CD4-positive, alpha-beta memory T cell (primary cell): ENCODE measurements at regions of chr3 and their contacts with region 1.

Region 1: DNA sequence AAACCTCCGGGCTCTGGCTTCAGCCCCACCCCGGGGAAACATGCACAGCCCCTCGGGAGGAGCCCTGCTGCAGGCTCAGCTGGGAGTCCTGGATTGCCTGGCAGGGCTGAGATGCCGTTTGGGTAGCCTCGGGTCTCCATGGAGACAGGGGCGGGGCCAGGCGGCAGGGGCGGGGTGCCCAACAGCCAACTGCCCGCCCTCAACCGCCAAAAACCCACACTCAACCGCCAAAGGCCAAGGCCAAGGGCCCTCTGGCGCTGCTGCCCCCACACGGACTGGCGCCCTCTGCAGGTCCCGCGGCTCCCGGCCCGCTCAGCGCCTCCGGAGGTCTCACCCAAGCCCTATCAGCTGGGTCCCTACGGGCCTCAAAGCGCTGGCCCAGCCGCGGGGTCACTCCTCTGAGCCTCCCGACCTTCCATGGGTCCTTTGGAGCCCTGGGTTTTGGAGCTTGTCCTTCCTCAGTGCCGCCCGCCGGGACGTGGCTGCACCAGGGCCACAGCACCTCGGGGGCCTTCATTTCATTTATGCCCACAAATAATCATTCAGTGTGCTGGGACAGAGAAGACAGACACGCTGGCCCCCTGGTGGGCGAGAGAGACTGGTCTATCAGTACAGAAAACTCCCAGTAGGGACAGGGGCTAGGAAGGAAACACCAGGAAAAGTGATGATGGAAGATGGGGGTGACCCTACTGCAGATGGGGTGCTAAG is 33.5 kb upstream of the ACAD9 start:
- DNase-seq: peak; percentile 71 to 82 (median 73)
- H3K4me3 ChIP-seq: peak overlapping the region in 1 of 2 donors; percentile 52
- H3K4me3 Mint-ChIP-seq: peak overlapping the region; percentile 75 to 95 (median 88)
- H3K27ac ChIP-seq: peak overlapping the region; percentile 29
- H3K27ac Mint-ChIP-seq: peak overlapping the region; percentile 45 to 97 (median 84)
- H3K4me1 ChIP-seq: peaks cover 18% of the 10 kb centered on the region
- H3K4me1 Mint-ChIP-seq: peaks cover 8 to 14% (median 11%) of the 10 kb centered on the region in 4 donors
- H3K27me3 ChIP-seq: no peaks in the 10 kb centered on the region
- H3K27me3 Mint-ChIP-seq: no peaks in the 10 kb centered on the region

Region 2: GRCh38 chr3:128725932-128726690 is 119.8 kb before region 1 on chr3 and contains the start of gene RAB7A:
- CTCF ChIA-PET with region 1: interaction called, 6 read pairs
- POLR2A ChIA-PET with region 1: no interaction called
- intact Hi-C with region 1: loop called (anchors 2 kb)
- DNase-seq: peak; percentile 96 to 97 (median 96)
- H3K4me3 ChIP-seq: peak within 1 kb of the TSS; percentile 79 to 86
- H3K4me3 Mint-ChIP-seq: peak within 1 kb of the TSS; percentile 93 to 100 (median 97)
- H3K27ac ChIP-seq: peak within 1 kb of the TSS; percentile 98
- H3K27ac Mint-ChIP-seq: peak within 1 kb of the TSS; percentile 95 to 98 (median 97)
- H3K4me1 ChIP-seq: peaks cover 50% of the 10 kb centered on the region
- H3K4me1 Mint-ChIP-seq: peaks cover 40 to 59% (median 47%) of the 10 kb centered on the region in 4 donors
- H3K27me3 ChIP-seq: no peaks in the 10 kb centered on the region
- H3K27me3 Mint-ChIP-seq: peaks cover 0 to 2% of the 10 kb centered on the region in 2 donors
- total RNA-seq, gene RAB7A: 141 to 152 TPM

Region 3: GRCh38 chr3:128787256-128788240 is 58.4 kb before region 1 on chr3:
- CTCF ChIA-PET with region 1: interaction called, 29 read pairs
- POLR2A ChIA-PET with region 1: no interaction called
- intact Hi-C with region 1: loop called (anchors 1 kb)
- DNase-seq: peak; percentile 39 to 77 (median 43)
- H3K4me3 ChIP-seq: peak overlapping the region; percentile 0 to 57
- H3K4me3 Mint-ChIP-seq: peak overlapping the region; percentile 53 to 90 (median 84)
- H3K27ac ChIP-seq: peak overlapping the region; percentile 48
- H3K27ac Mint-ChIP-seq: peak overlapping the region; percentile 89 to 98 (median 94)
- H3K4me1 ChIP-seq: peaks cover 79% of the 10 kb centered on the region
- H3K4me1 Mint-ChIP-seq: peaks cover 56 to 87% (median 72%) of the 10 kb centered on the region in 4 donors
- H3K27me3 ChIP-seq: no peaks in the 10 kb centered on the region
- H3K27me3 Mint-ChIP-seq: no peaks in the 10 kb centered on the region

Region 4: GRCh38 chr3:128804017-128804810 is 41.7 kb before region 1 on chr3:
- CTCF ChIA-PET with region 1: interaction called, 6 read pairs
- POLR2A ChIA-PET with region 1: interaction called, 6 read pairs
- intact Hi-C with region 1: loop called (anchors 5 kb)
- DNase-seq: peak; percentile 77 to 85 (median 81)
- H3K4me3 ChIP-seq: peak overlapping the region; percentile 26 to 45
- H3K4me3 Mint-ChIP-seq: peak overlapping the region; percentile 78 to 89 (median 84)
- H3K27ac ChIP-seq: peak overlapping the region; percentile 81
- H3K27ac Mint-ChIP-seq: peak overlapping the region; percentile 90 to 97 (median 95)
- H3K4me1 ChIP-seq: peaks cover 68% of the 10 kb centered on the region
- H3K4me1 Mint-ChIP-seq: peaks cover 54 to 78% (median 67%) of the 10 kb centered on the region in 4 donors
- H3K27me3 ChIP-seq: no peaks in the 10 kb centered on the region
- H3K27me3 Mint-ChIP-seq: no peaks in the 10 kb centered on the region

Region 5: DNA sequence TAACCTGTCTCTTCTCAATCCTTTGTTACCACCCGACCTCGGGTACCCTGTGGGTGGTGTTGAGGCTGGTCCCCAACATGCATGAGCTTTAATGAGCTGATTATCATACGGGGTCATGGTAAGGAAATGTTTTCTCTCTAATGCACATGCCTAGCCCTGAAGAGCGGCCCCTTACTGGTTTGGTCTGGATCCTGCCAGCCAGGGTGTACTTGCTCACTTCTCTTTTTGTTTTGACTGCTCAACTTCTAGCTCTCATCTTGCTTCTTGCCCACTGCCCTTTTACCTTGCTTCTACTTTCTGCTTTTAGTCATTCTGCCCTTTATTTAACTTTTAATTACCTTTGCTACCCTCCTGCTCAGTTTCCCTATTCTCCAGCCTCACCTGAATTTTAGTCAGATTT is 10.8 kb before region 1 on chr3:
- CTCF ChIA-PET with region 1: no interaction called
- POLR2A ChIA-PET with region 1: no interaction called
- intact Hi-C with region 1: no loop called
- DNase-seq: no peak
- H3K4me3 ChIP-seq: no peak overlapping the region
- H3K4me3 Mint-ChIP-seq: no peak overlapping the region
- H3K27ac ChIP-seq: no peak overlapping the region
- H3K27ac Mint-ChIP-seq: no peak overlapping the region
- H3K4me1 ChIP-seq: no peaks in the 10 kb centered on the region
- H3K4me1 Mint-ChIP-seq: no peaks in the 10 kb centered on the region
- H3K27me3 ChIP-seq: no peaks in the 10 kb centered on the region
- H3K27me3 Mint-ChIP-seq: no peaks in the 10 kb centered on the region

Region 6: DNA sequence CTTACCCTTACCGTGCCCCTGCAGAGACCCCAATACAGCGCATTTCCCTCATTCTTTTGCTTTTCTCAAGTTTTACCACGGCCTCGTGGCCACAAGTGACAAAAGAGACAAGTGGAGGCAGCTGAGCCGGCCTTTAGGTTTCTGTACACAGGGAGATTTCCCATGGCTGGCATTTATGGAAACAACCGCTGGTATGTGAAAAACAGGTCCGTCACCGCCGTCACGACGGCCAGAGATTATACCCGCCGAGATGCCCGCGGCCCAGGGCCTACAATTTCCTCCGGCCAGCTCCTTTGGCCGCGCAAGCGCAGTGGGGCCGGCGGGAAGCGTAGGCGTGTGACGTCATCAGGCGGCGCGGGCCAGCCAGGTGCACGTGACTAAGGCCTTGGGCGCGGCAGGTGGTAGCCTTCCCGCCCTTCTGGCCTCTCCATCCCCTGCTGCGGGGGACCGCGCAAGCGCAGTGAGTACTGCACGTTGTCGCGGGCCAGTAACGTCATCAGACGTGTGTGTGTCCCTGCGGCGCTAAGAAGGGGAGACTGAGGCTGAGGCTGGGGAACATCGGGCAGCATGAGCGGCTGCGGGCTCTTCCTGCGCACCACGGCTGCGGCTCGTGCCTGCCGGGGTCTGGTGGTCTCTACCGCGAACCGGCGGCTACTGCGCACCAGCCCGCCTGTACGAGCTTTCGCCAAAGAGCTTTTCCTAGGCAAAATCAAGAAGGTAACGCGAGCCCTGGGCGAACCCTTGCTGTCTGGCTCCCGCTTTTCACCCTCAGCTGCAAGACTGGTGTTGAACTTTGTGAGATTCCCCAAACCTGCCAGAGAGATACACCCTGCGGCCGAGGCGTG is 33.4 kb after region 1 on chr3 and contains the start of gene ACAD9:
- CTCF ChIA-PET with region 1: interaction called, 7 read pairs
- POLR2A ChIA-PET with region 1: interaction called, 8 read pairs
- intact Hi-C with region 1: loop called (anchors 1 kb)
- DNase-seq: peak; percentile 97
- H3K4me3 ChIP-seq: peak within 1 kb of the TSS; percentile 82 to 91
- H3K4me3 Mint-ChIP-seq: peak within 1 kb of the TSS; percentile 85 to 97 (median 94)
- H3K27ac ChIP-seq: peak within 1 kb of the TSS; percentile 92
- H3K27ac Mint-ChIP-seq: peak within 1 kb of the TSS; percentile 92 to 99 (median 99)
- H3K4me1 ChIP-seq: peaks cover 38% of the 10 kb centered on the region
- H3K4me1 Mint-ChIP-seq: peaks cover 47 to 79% (median 61%) of the 10 kb centered on the region in 4 donors
- H3K27me3 ChIP-seq: no peaks in the 10 kb centered on the region
- H3K27me3 Mint-ChIP-seq: no peaks in the 10 kb centered on the region
- total RNA-seq, gene ACAD9: 54.9 to 62.2 TPM

Region 7: GRCh38 chr3:129026728-129027543 is 181.0 kb after region 1 on chr3:
- CTCF ChIA-PET with region 1: no interaction called
- POLR2A ChIA-PET with region 1: no interaction called
- intact Hi-C with region 1: no loop called
- DNase-seq: peak; percentile 91 to 95 (median 94)
- H3K4me3 ChIP-seq: peak overlapping the region; percentile 42 to 57
- H3K4me3 Mint-ChIP-seq: peak overlapping the region; percentile 76 to 88 (median 85)
- H3K27ac ChIP-seq: peak overlapping the region; percentile 55
- H3K27ac Mint-ChIP-seq: peak overlapping the region; percentile 91 to 97 (median 97)
- H3K4me1 ChIP-seq: peaks cover 16% of the 10 kb centered on the region
- H3K4me1 Mint-ChIP-seq: peaks cover 10 to 25% (median 16%) of the 10 kb centered on the region in 4 donors
- H3K27me3 ChIP-seq: no peaks in the 10 kb centered on the region
- H3K27me3 Mint-ChIP-seq: no peaks in the 10 kb centered on the region